ENCODE measurements at regions of chr19 and their contacts with region 1.

Region 1: GRCh38 chr19:19663256-19664038 is at the start of gene ATP13A1:
- DNase-seq: peak; percentile 95 to 96
- ATAC-seq: peak; percentile 93 to 98
- H3K4me3 ChIP-seq: peak within 1 kb of the TSS; percentile 77 to 96 (median 94)
- H3K27ac ChIP-seq: peak within 1 kb of the TSS; percentile 93 to 99 (median 96)
- H3K4me1 ChIP-seq: peaks cover 10 to 25% of the 10 kb centered on the region in 2 donors
- H3K27me3 ChIP-seq: no peaks in the 10 kb centered on the region
- CTCF ChIP-seq: peak in 1 of 5 experiments; percentile 44
- POLR2A ChIP-seq: peak; percentile 41 to 59
- total RNA-seq, gene ATP13A1: 51.8 to 111 (median 82.8) TPM

Region 2: GRCh38 chr19:19320362-19321142 is 342.9 kb before region 1 on chr19 and contains the starts of genes MAU2 and SUGP1:
- in situ Hi-C with region 1: no loop called
- intact Hi-C with region 1: loop called (anchors 5 kb)
- DNase-seq: peak; percentile 83 to 87
- ATAC-seq: peak; percentile 88 to 97
- H3K4me3 ChIP-seq: peak within 1 kb of the TSS; percentile 80 to 96 (median 93)
- H3K27ac ChIP-seq: peak within 1 kb of the TSS; percentile 88 to 98 (median 92)
- H3K4me1 ChIP-seq: peaks cover 48 to 57% of the 10 kb centered on the region in 2 donors
- H3K27me3 ChIP-seq: no peaks in the 10 kb centered on the region
- CTCF ChIP-seq: peak in 4 of 5 experiments; percentile 43 to 62 (median 48)
- POLR2A ChIP-seq: peak; percentile 28 to 75
- total RNA-seq, gene MAU2: 31.3 to 48.5 (median 41.7) TPM
- total RNA-seq, gene SUGP1: 29.7 to 51.0 (median 39.8) TPM

Region 3: GRCh38 chr19:19404879-19405860 is 258.3 kb before region 1 on chr19 and contains the start of gene GATAD2A:
- in situ Hi-C with region 1: no loop called
- intact Hi-C with region 1: loop called (anchors 5 kb)
- DNase-seq: peak; percentile 91 to 94
- ATAC-seq: peak; percentile 77 to 86
- H3K4me3 ChIP-seq: peak within 1 kb of the TSS; percentile 82 to 91 (median 88)
- H3K27ac ChIP-seq: peak within 1 kb of the TSS; percentile 88 to 93 (median 93)
- H3K4me1 ChIP-seq: peaks cover 55 to 65% of the 10 kb centered on the region in 2 donors
- H3K27me3 ChIP-seq: no peaks in the 10 kb centered on the region
- CTCF ChIP-seq: peak in 3 of 5 experiments; percentile 41 to 48 (median 41)
- POLR2A ChIP-seq: peak; percentile 76 to 77
- total RNA-seq, gene GATAD2A: 17.7 to 51.4 (median 40.1) TPM

Region 4: DNA sequence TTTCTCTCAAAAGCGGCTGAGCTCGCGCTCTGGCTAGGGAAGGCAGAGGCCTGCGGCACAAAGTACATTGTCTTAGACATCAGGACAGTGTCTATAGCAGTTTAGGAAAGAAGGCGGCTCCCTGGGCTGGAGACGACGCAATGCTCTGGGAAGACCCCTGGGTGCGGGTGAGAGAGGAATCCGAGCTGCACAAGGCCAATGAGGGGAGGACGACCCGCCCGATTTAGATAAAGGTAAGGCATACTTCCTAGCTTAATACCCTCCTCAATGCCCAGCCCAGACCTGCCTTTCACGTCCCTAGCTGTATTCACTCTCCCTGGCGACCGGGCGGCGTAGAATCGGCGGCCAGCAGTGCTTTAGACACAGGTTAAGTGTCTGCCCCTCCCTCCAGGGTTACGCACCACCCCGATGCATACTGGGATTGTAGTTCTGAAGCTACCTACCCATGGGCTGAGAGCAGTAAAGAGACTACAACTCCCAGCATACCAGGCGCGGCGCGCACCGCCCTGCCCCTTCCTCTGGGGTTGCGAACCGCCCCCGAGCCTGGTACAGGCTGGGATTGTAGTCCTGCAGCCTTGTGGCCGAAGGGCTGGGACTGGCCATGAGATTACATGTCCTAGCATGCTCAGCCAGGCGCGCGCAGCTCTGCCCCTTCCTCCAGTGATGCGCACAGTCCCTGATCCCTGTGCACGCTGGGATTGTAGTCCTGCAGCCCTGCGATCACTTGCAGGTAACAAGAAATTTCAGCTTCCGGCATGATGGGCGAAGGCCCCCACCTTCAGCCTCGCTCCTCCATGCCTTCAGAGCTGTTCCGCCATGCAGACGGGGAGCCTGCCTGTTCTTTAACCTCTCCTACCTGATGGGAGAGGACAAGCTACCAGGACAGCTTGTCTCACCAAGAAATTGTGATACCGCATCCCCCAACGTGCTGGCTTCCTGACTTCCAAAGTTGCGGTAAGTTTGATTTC is 112.9 kb after region 1 on chr19:
- in situ Hi-C with region 1: no loop called
- intact Hi-C with region 1: loop called (anchors 2 kb)
- DNase-seq: peak; percentile 95 to 97
- ATAC-seq: peak; percentile 100
- H3K4me3 ChIP-seq: peak overlapping the region; percentile 62 to 83 (median 82)
- H3K27ac ChIP-seq: peak overlapping the region; percentile 75 to 87 (median 80)
- H3K4me1 ChIP-seq: peaks cover 14 to 19% of the 10 kb centered on the region in 2 donors
- H3K27me3 ChIP-seq: no peaks in the 10 kb centered on the region
- CTCF ChIP-seq: peak in 2 of 5 experiments; percentile 10 to 25
- POLR2A ChIP-seq: peak; percentile 14 to 33

Region 5: GRCh38 chr19:19865739-19866481 is 202.5 kb after region 1 on chr19 and contains the start of gene ZNF253:
- in situ Hi-C with region 1: no loop called
- intact Hi-C with region 1: loop called (anchors 5 kb)
- DNase-seq: peak; percentile 95 to 97
- ATAC-seq: peak; percentile 98 to 99
- H3K4me3 ChIP-seq: peak within 1 kb of the TSS; percentile 74 to 85 (median 80)
- H3K27ac ChIP-seq: peak within 1 kb of the TSS; percentile 93 to 96 (median 94)
- H3K4me1 ChIP-seq: peaks cover 25 to 28% of the 10 kb centered on the region in 2 donors
- H3K27me3 ChIP-seq: no peaks in the 10 kb centered on the region
- CTCF ChIP-seq: no peak
- POLR2A ChIP-seq: peak; percentile 82 to 97
- total RNA-seq, gene ZNF253: 3.1 to 9.5 (median 6.3) TPM

Measured in gastrocnemius medialis (tissue), 4 donors.